Breast epithelium (tissue), 4 donors: ENCODE measurements at regions of chr22 and their contacts with region 1.

Region 1: DNA sequence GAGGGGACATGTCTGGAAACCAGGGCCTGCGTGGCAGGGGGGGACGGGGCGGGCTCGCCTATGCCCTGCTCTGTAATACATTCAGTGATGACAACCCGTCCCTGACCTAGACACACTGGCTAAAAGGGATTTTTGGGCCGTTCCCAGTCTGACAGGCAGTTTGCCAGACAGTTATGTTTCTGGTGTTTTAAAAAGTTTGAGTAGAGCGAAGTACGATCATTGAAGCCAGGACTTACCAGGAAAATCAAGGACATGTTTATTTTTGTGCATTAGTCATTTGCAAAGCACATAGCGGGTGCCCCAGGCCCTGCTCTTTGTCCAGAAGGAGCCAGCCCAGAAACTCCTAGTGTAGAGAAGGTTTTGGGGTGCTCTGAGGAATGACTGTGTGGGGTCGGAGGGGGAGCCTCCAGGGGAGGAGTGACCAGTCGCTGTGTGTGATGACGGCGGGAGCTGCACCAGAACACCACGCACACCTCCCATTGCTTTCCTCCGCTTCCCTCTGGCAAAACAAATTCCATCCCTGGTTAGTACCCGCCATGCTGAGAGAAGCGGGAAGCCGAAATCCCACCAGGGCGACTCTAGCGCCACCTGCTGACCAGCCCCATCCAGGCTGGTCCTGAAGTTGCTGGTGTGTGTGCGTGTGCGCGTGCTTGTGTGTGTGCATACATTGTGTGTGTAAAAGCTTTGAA is 50.8 kb downstream of the FBLN1 start:
- DNase-seq: peak; percentile 83 to 86
- H3K4me3 ChIP-seq: peak overlapping the region in 2 of 3 donors; percentile 10 to 40
- H3K27ac ChIP-seq: peak overlapping the region; percentile 90 to 95
- H3K4me1 ChIP-seq: peaks cover 29 to 44% of the 10 kb centered on the region in 2 donors
- H3K27me3 ChIP-seq: no peaks in the 10 kb centered on the region
- CTCF ChIP-seq: peak; percentile 94 to 97 (median 95)
- POLR2A ChIP-seq: no peak

Region 2: DNA sequence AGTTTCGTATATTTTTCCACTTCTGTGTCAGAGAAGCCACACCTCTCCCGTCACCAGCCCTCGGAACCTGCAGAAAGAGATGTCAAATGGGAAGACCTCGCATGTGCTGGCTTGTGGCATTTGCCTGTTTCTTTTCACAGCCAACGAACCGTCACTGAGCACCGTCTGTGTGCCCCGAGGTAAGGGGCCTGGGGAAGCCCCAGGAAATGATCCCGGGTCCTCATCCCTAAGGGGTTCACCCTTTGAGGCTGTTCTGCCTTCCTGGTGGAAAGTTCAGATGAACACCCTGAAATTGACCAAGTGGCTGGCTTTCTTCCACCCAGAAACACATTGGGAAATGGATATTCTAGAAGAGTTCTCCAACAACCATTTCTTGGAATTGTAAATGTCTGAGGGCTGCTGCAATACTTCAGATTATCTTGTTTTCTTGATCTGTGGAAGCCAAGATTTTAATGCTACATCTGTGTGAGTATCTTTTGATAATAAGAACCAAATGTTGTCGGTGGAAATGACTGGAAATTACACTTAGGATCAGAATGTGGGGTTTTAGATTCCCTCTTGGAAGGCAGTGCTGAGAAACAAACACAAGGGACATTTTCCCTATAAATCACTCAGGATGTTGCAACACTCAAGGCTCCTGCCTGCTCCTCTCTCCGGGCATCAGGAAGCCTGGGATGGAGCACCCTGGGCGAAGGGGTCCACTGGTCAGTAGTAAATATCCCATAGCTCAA is 102.4 kb before region 1 on chr22:
- intact Hi-C with region 1: loop called (anchors 5 kb)
- DNase-seq: no peak
- H3K4me3 ChIP-seq: no peak overlapping the region
- H3K27ac ChIP-seq: peak overlapping the region; percentile 61 to 95
- H3K4me1 ChIP-seq: peaks cover 0 to 8% of the 10 kb centered on the region in 2 donors
- H3K27me3 ChIP-seq: no peaks in the 10 kb centered on the region
- CTCF ChIP-seq: no peak
- POLR2A ChIP-seq: no peak